Activated T-helper 1 cell treated with anti-CD3 and anti-CD28 coated beads, Interleukin-12 subunit alpha, Interleukin-12 subunit beta, Interleukin-2, Interleukin-4 antibody, amounts not matched to agents 30 ng/mL and 10 ng/mL and 1 ng/mL, durations not matched to agents 14 hours and 24 hours and 36 hours (primary cell): ENCODE measurements at regions of chr5 and their contacts with region 1.

Region 1: DNA sequence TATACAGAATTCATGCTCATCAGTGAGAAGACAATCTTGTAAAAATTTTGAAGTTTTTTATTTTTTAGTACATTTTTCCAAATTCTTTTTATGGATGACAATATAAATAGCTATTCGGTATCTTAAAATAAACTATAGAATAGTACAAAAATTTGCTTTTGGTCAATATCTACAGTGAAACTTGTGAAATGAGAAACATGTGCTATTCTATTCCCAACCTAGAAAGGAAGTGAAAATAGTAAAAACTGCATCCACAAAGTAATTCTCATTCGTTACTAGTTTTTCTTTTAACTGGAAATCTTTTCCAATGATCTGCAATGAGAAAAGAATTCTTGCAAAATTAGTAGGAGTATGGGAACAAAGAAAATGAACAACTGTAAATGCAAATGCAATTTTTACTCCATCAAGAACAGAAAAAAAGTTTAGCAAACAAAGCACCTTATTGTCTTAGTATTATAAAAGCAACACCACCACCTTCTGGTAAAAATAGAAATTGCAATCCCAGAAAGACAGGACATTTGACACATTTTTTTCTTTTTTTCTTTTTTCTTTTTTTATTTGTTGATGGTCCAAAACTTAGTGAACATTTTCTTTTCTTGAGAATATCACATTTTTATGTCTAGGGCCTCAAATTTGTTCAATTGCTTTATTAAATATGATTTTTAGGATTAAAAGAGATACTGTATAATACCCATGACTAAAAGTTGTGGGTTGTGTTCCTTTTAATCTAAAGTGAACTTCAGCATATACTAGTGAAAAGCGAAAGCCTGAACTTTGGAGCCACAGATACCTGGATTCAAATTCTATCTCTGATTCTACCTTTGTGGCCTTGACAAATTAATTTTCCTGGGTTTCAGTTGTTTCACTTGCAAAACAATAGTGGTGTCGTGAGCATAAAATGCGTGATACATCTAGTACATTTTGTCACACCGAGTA is 72.3 kb downstream of the SLCO4C1 start:
- DNase-seq: no peak
- H3K4me3 Mint-ChIP-seq: no peak overlapping the region
- H3K27ac Mint-ChIP-seq: no peak overlapping the region
- H3K4me1 Mint-ChIP-seq: no peaks in the 10 kb centered on the region
- H3K27me3 Mint-ChIP-seq: peaks cover 6% of the 10 kb centered on the region

Region 2: DNA sequence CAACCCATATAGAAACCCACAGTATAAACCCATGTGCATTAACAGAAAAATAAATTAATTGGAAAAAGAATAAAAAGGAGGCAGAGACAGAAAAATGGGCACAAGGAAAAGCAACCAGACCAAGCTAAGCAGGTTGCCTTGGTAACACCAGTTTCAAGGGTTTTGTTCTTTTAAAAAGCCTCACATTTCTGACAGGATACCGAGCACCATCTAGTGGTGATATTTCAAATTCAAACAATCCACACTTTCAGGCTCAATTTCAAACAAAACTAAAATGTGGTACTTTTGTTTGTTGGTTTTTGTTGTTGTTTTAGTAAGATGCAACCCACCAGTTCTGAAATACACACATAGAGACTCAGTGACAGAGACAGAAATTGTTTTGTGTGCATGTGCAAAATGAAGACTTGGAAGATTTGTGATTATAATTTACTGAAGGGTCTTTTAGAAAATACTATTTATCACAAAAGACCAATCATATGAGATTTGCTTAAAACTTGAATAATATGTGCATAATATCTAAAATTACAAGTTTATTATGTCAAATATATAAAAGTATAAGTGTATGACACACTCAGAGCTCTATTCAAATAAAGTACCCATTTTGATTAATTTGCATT is 246.0 kb before region 1 on chr5:
- intact Hi-C with region 1: loop called (anchors 1 kb)
- DNase-seq: no peak
- H3K4me3 Mint-ChIP-seq: no peak overlapping the region
- H3K27ac Mint-ChIP-seq: no peak overlapping the region
- H3K4me1 Mint-ChIP-seq: no peaks in the 10 kb centered on the region
- H3K27me3 Mint-ChIP-seq: no peaks in the 10 kb centered on the region